ENCODE measurements at regions of chr13 and their contacts with region 1.

Region 1: GRCh38 chr13:36431654-36432511 is at the start of gene CCNA1:
- DNase-seq: peak in 3 of 5 donors; percentile 24 to 52 (median 52)
- H3K4me3 ChIP-seq: peak within 1 kb of the TSS; percentile 44
- H3K27ac ChIP-seq: no peak within 1 kb of the TSS
- H3K4me1 ChIP-seq: peaks cover 12% of the 10 kb centered on the region
- H3K27me3 ChIP-seq: no peaks in the 10 kb centered on the region
- CTCF ChIP-seq: no peak
- EP300 ChIP-seq: no peak
- POLR2A ChIP-seq: no peak
- total RNA-seq, gene CCNA1: 0.24 to 12.5 (median 1.6) TPM in 5 of 7 donors, not detected in the others

Region 2: DNA sequence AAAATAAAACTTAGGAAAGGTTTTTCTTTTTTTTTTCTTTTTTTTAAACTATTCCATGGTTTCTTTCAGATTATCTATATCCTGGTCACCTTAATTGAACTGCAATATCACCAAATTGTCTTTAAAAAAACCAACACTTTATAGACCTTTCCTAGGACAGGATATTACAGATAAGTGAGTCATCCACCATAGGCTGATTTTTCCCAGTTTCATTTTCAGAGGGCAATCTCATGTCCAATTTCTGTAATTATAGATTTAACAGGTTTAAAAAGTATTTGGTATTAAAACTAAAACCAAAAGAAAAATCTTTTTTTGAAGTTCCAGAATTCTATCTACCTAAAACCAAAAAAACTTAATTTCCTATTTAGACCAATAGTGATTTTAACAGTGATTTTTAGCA is 98.9 kb before region 1 on chr13:
- intact Hi-C with region 1: no loop called
- DNase-seq: no peak
- H3K4me3 ChIP-seq: no peak overlapping the region
- H3K27ac ChIP-seq: no peak overlapping the region
- H3K4me1 ChIP-seq: peaks cover 12% of the 10 kb centered on the region
- H3K27me3 ChIP-seq: no peaks in the 10 kb centered on the region
- CTCF ChIP-seq: no peak
- EP300 ChIP-seq: no peak
- POLR2A ChIP-seq: no peak

Region 3: DNA sequence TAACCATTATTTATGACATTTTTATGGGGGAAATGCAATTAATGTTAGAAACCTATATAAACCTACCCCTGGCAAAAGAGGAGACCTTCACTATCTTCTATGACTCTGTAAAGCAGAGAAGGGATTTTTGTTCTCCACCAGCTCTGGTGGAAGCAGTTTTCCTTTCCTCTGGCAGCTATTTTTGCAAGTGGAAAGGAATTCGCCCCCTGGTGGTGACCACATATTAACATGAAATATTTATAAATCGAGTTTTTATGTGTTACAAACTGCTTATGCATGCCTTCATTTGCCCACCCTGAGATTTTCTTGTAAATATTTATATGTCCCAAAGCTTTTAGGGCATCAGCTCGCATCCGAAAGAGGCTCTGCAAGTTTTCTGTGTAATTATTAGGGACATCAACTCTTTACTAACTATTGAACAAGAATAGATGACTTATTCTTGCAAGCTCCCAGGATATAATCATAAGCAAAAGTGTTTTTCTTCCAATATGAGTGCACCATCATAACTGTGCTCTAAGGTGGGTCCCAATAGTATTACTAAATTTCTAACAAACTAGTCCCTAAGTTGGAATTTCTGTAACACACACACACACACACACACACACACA is 304.3 kb after region 1 on chr13:
- intact Hi-C with region 1: loop called in 1 of 4 experiments (anchors 10 kb)
- DNase-seq: peak in 4 of 5 donors; percentile 23 to 58 (median 45)
- H3K4me3 ChIP-seq: no peak overlapping the region
- H3K27ac ChIP-seq: no peak overlapping the region
- H3K4me1 ChIP-seq: no peaks in the 10 kb centered on the region
- H3K27me3 ChIP-seq: no peaks in the 10 kb centered on the region
- CTCF ChIP-seq: peak; percentile 31 to 53 (median 36)
- EP300 ChIP-seq: no peak
- POLR2A ChIP-seq: no peak

Region 4: GRCh38 chr13:37481011-37481884 is 1049.4 kb after region 1 on chr13:
- intact Hi-C with region 1: loop called in 1 of 4 experiments (anchors 10 kb)
- DNase-seq: no peak
- H3K4me3 ChIP-seq: no peak overlapping the region
- H3K27ac ChIP-seq: no peak overlapping the region
- H3K4me1 ChIP-seq: peaks cover 3% of the 10 kb centered on the region
- H3K27me3 ChIP-seq: no peaks in the 10 kb centered on the region
- CTCF ChIP-seq: no peak
- EP300 ChIP-seq: no peak
- POLR2A ChIP-seq: no peak

Measured in ovary (tissue), 10 donors.